ENCODE measurements at regions of chr22 and their contacts with region 1.

Region 1: DNA sequence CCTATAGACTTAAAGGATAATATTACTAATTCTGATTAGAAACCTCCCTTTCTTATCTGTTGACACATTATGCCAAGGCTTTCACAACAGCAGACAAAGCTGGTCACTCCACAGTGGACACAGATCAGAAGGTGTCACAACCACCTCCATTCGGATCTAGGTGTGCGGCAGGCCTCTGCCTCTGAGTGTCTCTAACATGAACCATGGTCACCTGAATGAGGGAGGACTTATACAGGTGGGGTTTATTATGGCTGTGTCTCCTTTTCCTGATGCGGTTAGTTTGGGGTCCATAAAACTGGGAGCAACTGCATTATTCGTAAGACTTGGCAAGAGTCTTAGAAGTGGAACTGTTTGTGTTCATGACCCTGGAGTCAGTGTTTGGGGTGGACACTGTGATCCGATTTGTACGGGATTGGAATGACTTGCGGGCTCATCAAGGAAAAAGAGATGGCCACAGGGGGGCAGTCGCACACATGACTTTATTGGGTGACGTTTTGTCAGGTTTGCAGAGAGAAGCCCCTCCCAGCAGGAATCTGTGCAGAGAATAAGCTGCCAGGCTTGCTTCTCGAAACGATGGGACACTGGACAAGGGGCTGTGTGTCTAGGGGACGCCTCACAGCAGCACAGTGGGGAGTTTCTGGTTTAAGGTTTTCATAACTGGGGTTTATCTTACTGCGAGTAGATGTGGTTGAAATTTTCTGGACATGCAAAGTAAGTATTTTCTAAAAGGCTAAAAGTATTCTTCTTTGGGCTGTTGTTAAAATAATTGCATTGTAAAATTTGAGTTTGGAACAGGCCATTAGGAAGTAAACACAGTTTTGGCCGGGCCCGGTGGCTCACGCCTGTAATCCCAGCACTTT is 90.6 kb downstream of the GAB4 start:
- DNase-seq: peak; percentile 57 to 85 (median 70)
- H3K4me3 ChIP-seq: no peak overlapping the region
- H3K27ac ChIP-seq: no peak overlapping the region
- H3K27me3 ChIP-seq: peaks cover 0 to 39% (median 7%) of the 10 kb centered on the region in 45 donors
- CTCF ChIP-seq: peak; percentile 53 to 86 (median 70)

Region 2: DNA sequence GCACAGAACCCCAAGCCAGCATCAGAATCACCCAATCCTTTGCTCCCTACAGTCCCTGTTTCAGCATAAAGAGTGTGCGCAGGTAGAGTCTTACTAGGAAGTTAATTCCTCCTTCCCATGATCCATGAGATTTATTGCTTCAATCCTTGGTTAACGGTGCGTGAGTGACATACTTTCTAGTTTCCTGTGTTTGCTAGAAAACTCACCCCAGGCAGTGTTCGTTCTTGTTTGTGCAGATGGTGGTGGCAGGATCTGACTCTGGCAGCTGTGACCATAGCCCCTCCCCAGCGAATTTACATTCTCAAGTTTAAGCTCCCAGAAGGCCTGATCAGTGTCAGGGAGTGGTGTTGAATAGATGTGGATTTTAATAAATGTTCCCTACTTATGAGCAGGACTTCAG is 218.0 kb before region 1 on chr22:
- intact Hi-C with region 1: no loop called
- DNase-seq: no peak
- H3K4me3 ChIP-seq: no peak overlapping the region
- H3K27ac ChIP-seq: no peak overlapping the region
- H3K27me3 ChIP-seq: peaks cover 0 to 7% (median 0%) of the 10 kb centered on the region in 45 donors
- CTCF ChIP-seq: no peak

Region 3: DNA sequence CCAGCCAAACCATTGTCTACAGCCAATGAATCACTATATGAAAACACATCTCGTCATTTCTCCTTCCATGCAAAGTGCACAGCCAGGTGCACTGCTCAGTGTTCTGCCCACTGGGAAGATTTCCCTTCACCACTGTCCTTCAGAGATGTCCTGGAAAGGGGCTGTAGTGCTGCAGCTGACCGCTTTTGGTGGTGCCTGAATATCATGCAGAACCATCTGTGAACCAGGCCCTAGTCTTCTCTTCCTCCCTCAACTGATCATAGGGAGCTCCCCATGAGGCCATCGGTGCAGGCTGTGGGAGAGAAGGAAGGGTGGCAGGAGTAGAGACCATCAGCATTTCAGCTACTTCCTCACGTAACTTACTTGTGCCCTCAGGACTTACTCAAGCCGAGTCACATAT is 20.4 kb after region 1 on chr22:
- intact Hi-C with region 1: no loop called
- DNase-seq: no peak
- H3K4me3 ChIP-seq: no peak overlapping the region
- H3K27ac ChIP-seq: no peak overlapping the region
- H3K27me3 ChIP-seq: peaks cover 0 to 37% (median 0%) of the 10 kb centered on the region in 45 donors
- CTCF ChIP-seq: no peak

Region 4: DNA sequence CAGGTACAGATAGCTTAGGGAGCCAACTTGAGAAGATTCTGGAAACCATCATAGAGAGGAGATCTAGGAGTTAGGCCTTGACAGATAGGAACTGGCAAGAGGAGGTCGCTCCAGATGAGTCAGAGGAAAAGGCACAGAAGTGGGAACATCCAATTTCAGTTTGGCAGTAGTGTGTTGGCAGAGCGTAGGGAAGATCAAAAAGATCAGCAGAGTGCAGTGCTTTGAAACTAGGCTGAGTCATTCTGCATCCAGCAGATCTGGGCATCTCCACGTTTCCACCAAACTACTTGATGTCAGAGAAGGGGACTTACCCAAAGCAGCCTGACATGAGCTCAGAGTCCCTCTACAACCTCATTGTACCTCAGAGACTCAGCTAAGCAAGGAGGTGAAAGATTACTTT is 32.2 kb after region 1 on chr22:
- intact Hi-C with region 1: no loop called
- DNase-seq: no peak
- H3K4me3 ChIP-seq: no peak overlapping the region
- H3K27ac ChIP-seq: no peak overlapping the region
- H3K27me3 ChIP-seq: peaks cover 0 to 1% (median 0%) of the 10 kb centered on the region in 45 donors
- CTCF ChIP-seq: no peak

Region 5: GRCh38 chr22:17057959-17058814 is 140.8 kb after region 1 on chr22:
- intact Hi-C with region 1: loop called in 1 of 2 experiments (anchors 1 kb)
- DNase-seq: peak; percentile 44 to 79 (median 72)
- H3K4me3 ChIP-seq: no peak overlapping the region
- H3K27ac ChIP-seq: no peak overlapping the region
- H3K27me3 ChIP-seq: no peaks in the 10 kb centered on the region
- CTCF ChIP-seq: peak; percentile 68 to 98 (median 95)

Region 6: DNA sequence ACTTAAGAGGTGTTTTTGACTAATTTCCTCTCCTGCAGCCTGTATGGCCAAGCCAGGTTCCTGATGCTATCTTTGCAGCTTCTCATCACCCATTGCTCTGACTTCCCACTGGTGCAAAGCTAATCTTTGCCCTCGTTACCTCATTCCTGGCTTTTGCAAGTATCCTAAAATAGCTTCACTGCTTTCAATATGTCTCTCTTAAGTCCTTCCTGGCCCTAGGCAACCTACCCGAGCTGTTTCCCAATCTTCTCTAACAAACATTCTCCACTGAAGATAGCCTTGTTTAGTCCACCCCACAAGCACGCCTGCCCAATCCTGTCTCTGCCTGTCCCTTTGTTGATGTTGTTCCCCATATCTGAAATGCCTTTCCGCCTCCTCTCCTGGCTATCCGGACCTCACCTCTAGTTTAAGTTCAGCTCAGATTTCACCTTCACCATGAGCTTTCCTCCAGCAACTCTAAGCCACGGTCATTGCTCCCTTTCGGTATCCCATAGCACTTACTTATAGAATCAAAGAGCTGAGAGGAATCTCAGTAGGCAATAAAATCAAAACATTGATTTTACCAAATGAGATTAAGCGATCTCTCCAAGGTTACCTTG is 421.8 kb after region 1 on chr22:
- intact Hi-C with region 1: no loop called
- DNase-seq: no peak
- H3K4me3 ChIP-seq: no peak overlapping the region
- H3K27ac ChIP-seq: no peak overlapping the region
- H3K27me3 ChIP-seq: peaks cover 0 to 10% (median 0%) of the 10 kb centered on the region in 45 donors
- CTCF ChIP-seq: no peak

Region 7: DNA sequence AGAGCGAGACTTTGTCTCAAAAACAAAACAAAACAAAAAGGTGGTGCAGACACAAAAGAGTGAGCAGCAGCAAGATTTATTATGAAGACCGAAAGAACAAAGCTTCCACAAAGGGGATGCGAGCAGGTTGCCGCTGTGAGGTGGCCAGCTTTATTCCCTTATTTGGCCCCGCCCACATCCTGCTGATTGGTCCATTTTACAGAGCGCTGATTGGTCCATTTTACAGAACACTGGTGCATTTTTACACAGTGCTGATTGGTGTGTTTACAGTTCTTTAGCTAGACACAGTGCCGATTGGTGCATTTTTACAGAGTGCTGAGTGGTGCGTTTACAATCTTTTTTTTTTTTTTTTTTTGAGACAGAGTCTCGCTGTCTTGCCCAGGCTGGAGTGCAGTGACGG is 529.3 kb after region 1 on chr22:
- intact Hi-C with region 1: loop called in 1 of 2 experiments (anchors 5 kb)
- DNase-seq: no peak
- H3K4me3 ChIP-seq: no peak overlapping the region
- H3K27ac ChIP-seq: no peak overlapping the region
- H3K27me3 ChIP-seq: peaks cover 0 to 3% (median 0%) of the 10 kb centered on the region in 45 donors
- CTCF ChIP-seq: no peak